Activated CD4-positive, alpha-beta T cell treated with anti-CD3 and anti-CD28 coated beads, Interleukin-2, amount 10 ng/mL, durations not matched to agents 7 days and 5 days (primary cell): ENCODE measurements at regions of chr19 and their contacts with region 1.

Region 1: DNA sequence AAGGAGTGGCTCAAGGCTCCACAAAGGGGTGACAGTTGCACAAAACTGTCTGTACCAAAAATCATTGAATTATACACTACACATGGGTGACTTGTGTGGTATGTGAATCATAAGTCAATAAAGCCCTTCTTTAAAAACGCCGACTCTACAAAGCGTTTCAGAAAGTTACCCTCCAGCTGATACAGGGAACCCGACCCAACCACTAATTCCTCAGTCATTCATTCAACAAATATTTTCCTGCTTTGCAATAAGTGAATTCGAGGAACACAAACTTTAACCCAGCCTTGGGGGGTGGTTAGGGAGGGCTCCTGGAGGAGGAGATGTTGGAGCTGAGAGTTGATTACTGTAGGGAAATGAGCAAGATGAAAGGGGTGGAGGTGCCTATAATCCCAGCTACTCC is 32.0 kb downstream of the LTBP4 start:
- DNase-seq: no peak
- H3K4me3 Mint-ChIP-seq: no peak overlapping the region
- H3K27ac Mint-ChIP-seq: no peak overlapping the region
- H3K4me1 Mint-ChIP-seq: peaks cover 15% of the 10 kb centered on the region
- H3K27me3 Mint-ChIP-seq: peaks cover 7% of the 10 kb centered on the region

Region 2: DNA sequence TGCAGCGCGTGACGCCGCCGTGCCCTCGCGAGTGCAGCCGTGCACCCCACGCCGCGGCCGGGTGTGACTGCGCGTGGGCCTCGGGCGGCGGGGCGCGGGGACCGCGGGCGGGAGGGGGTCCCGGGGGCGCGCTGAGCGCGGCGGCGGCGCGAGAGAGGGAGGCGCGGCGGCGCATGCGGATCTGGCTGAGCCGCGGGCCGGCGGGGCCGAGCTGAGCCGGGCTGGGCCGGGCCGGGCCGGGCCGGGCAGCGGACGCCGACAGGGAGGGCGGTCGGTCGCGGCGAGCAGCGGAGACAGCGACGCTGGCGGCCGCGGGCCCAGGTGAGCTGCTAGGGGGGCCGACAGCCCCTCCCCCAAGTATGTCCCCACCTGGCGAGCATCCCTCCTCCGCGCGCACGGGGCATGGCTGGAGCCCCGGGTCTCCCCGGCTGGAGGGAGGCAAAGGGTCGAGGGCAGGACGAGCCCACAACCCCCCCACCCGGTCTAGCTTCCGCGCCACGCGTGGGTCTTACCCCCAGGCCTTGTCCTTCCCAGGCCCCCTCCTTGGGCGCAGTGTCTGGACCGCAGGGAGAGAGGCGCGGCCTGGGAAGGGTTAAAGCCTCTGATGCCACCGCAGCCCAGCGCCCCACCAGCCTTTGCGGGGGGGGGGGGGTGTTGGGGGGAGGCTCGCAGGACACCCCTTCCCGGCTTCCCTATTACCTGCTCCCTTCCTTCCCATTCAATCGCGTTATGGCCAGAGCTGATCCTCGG is 166.0 kb before region 1 on chr19 and contains the start of gene SPTBN4:
- CTCF ChIA-PET with region 1: no interaction called
- POLR2A ChIA-PET with region 1: no interaction called
- DNase-seq: no peak
- H3K4me3 Mint-ChIP-seq: peak within 1 kb of the TSS; percentile 85
- H3K27ac Mint-ChIP-seq: peak within 1 kb of the TSS; percentile 82
- H3K4me1 Mint-ChIP-seq: peaks cover 30% of the 10 kb centered on the region
- H3K27me3 Mint-ChIP-seq: peaks cover 19% of the 10 kb centered on the region
- total RNA-seq, gene SPTBN4: 0.23 to 0.50 TPM

Region 3: DNA sequence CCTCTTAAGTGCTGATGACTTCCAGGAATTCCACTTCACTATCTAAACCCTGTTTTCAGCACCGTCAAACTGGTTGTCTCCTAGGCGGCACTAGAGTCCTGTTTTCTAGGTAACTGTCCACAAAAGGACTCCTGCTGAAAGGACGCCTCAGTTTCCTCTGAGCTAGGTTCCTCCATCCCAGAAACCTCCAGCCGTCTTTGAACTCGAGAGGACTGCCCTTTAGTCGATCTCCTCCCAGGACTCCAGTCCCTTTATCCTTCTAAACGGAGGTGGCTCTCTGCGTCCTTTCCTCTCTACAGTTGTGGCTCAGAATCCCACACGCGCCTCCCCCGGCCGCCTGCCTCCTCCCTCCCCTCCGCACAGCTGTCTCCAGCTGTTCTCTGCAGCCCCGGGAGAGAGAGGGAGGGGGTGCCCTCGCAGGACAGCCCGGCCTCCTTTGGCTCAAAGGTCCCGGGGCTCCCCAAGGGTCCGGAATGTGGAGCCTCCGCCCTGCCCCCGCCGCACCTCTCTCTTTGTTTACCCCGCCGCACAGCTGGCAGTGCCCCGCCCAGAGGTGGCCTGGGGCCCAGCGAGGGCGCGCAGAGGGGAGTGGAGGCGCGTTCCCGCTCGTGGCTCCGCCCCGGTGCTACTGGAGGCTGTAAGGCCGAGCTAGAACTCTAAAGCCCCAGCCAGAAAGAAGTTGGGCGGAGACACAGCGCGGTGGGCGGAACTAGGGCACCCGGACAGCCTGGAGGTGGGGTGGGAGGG is 29.6 kb before region 1 on chr19:
- CTCF ChIA-PET with region 1: interaction called, 12 read pairs
- POLR2A ChIA-PET with region 1: no interaction called
- DNase-seq: peak; percentile 99
- H3K4me3 Mint-ChIP-seq: peak overlapping the region; percentile 85
- H3K27ac Mint-ChIP-seq: peak overlapping the region; percentile 32
- H3K4me1 Mint-ChIP-seq: peaks cover 73% of the 10 kb centered on the region
- H3K27me3 Mint-ChIP-seq: peaks cover 31% of the 10 kb centered on the region

Region 4: GRCh38 chr19:40613640-40614303 is 19.4 kb before region 1 on chr19:
- CTCF ChIA-PET with region 1: interaction called, 12 read pairs
- POLR2A ChIA-PET with region 1: no interaction called
- DNase-seq: peak; percentile 88
- H3K4me3 Mint-ChIP-seq: peak overlapping the region; percentile 91
- H3K27ac Mint-ChIP-seq: peak overlapping the region; percentile 93
- H3K4me1 Mint-ChIP-seq: peaks cover 64% of the 10 kb centered on the region
- H3K27me3 Mint-ChIP-seq: no peaks in the 10 kb centered on the region

Region 5: GRCh38 chr19:40646564-40647254 is 13.5 kb after region 1 on chr19:
- CTCF ChIA-PET with region 1: interaction called, 36 read pairs
- POLR2A ChIA-PET with region 1: no interaction called
- DNase-seq: no peak
- H3K4me3 Mint-ChIP-seq: no peak overlapping the region
- H3K27ac Mint-ChIP-seq: no peak overlapping the region
- H3K4me1 Mint-ChIP-seq: peaks cover 5% of the 10 kb centered on the region
- H3K27me3 Mint-ChIP-seq: peaks cover 8% of the 10 kb centered on the region

Region 6: GRCh38 chr19:40672038-40672437 is 38.8 kb after region 1 on chr19:
- CTCF ChIA-PET with region 1: no interaction called
- POLR2A ChIA-PET with region 1: no interaction called
- DNase-seq: no peak
- H3K4me3 Mint-ChIP-seq: no peak overlapping the region
- H3K27ac Mint-ChIP-seq: no peak overlapping the region
- H3K4me1 Mint-ChIP-seq: peaks cover 1% of the 10 kb centered on the region
- H3K27me3 Mint-ChIP-seq: no peaks in the 10 kb centered on the region

Region 7: GRCh38 chr19:40709817-40710216 is 76.6 kb after region 1 on chr19:
- CTCF ChIA-PET with region 1: no interaction called
- POLR2A ChIA-PET with region 1: no interaction called
- DNase-seq: no peak
- H3K4me3 Mint-ChIP-seq: no peak overlapping the region
- H3K27ac Mint-ChIP-seq: no peak overlapping the region
- H3K4me1 Mint-ChIP-seq: peaks cover 22% of the 10 kb centered on the region
- H3K27me3 Mint-ChIP-seq: no peaks in the 10 kb centered on the region

Region 8: DNA sequence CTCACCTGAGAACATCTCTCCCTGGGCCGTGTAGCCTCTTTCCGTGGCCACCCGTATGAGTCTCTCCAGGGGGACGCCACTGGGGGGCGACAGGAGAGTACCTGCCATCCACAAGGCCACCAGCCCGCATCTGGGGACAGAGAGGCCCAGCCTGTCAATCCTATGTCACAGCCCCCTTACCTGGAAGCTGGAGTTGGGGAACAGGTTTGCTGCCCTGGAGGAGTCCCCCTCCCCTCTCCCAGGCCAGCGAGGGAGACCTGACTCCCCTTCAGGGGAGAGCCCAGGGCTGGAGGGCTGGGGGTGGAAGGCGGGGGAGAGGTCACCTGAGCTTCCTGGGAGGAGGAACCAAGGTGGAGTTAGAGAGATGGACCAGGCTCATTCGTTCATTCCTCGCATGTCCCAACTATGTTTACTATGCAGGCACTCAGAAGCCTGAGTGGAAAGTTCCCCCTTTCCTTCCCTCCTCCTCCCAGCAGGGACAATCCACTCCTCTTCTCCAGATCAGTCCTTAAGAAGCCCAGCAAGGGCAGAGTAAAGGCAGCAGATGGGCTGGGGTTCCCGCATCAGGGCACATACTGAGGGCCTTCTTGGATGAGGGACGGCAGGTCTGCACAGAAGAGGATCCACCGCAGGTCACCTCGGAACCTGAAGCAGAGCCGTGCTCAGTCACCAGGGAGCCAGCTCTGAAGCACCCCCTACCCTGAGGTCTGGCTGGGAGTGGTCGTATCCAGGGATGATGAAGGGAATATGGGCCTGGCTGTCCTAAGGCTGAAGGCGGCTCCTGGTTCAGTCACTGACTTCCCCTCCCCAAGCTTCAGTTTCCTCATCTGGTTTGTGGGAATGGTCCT is 111.6 kb after region 1 on chr19:
- CTCF ChIA-PET with region 1: no interaction called
- POLR2A ChIA-PET with region 1: no interaction called
- DNase-seq: peak; percentile 18
- H3K4me3 Mint-ChIP-seq: no peak overlapping the region
- H3K27ac Mint-ChIP-seq: no peak overlapping the region
- H3K4me1 Mint-ChIP-seq: peaks cover 15% of the 10 kb centered on the region
- H3K27me3 Mint-ChIP-seq: no peaks in the 10 kb centered on the region